CD4-positive, alpha-beta T cell (primary cell): ENCODE measurements at regions of chr13 and their contacts with region 1.

Region 1: GRCh38 chr13:98981369-98982080 is 3.7 kb upstream of the DOCK9 start:
- DNase-seq: peak in 1 of 14 experiments; percentile 9
- ATAC-seq: peak; percentile 74
- H3K4me3 ChIP-seq: no peak overlapping the region
- H3K4me3 Mint-ChIP-seq: no peak overlapping the region
- H3K27ac ChIP-seq: no peak overlapping the region
- H3K27ac Mint-ChIP-seq: peak overlapping the region; percentile 5
- H3K4me1 ChIP-seq: peaks cover 24% of the 10 kb centered on the region
- H3K4me1 Mint-ChIP-seq: peaks cover 93% of the 10 kb centered on the region
- H3K27me3 ChIP-seq: no peaks in the 10 kb centered on the region
- H3K27me3 Mint-ChIP-seq: no peaks in the 10 kb centered on the region
- CTCF ChIP-seq: no peak

Region 2: GRCh38 chr13:98918771-98919170 is 62.8 kb before region 1 on chr13:
- CTCF ChIA-PET with region 1: no interaction called
- POLR2A ChIA-PET with region 1: interaction called, 3 read pairs
- intact Hi-C with region 1: loop called in 1 of 2 experiments (anchors 5 kb)
- DNase-seq: peak in 5 of 14 experiments; percentile 9 to 37 (median 20)
- ATAC-seq: peak; percentile 84
- H3K4me3 ChIP-seq: no peak overlapping the region
- H3K4me3 Mint-ChIP-seq: no peak overlapping the region
- H3K27ac ChIP-seq: no peak overlapping the region
- H3K27ac Mint-ChIP-seq: peak overlapping the region; percentile 5
- H3K4me1 ChIP-seq: peaks cover 14% of the 10 kb centered on the region
- H3K4me1 Mint-ChIP-seq: peaks cover 56% of the 10 kb centered on the region
- H3K27me3 ChIP-seq: no peaks in the 10 kb centered on the region
- H3K27me3 Mint-ChIP-seq: no peaks in the 10 kb centered on the region
- CTCF ChIP-seq: no peak